ENCODE measurements at regions of chr11 and their contacts with region 1.

Region 1: DNA sequence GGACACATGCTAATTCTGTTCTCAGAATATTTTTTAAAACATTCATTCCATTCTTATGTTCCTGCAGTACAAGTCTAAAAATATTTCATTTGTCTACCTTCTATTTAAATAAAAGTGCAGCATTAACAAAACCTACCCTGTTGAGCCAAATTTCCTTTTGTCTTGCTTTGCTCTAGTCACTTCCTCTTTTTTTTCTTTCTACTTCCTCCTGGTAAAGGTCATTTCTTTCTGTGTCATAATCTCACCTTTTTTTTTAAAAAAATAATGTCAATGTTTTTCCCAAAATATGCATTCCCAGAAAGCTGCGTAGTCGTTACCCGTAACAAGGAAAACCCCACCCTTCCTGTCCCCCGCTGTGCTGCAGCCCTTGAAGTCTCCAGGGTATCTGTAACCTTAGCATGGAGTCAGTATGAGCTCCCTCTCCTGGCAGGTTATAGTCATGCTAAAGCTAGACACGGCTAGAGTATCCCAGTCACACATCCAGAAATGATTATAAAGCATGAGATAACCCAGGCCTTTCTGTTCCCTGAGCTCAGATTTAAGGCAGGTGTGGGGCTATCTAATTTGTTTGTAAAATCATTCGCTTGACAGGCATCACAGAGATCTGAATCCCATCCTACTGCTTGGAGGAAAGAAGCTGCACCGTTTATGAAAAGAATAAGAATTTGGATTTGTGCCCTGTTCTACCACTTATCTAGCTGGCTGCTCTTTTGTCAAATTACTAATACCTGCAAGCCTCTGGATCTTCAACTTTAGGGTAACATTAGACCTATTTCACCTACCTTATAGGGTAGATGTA is 51.1 kb upstream of the EED start:
- DNase-seq: peak; percentile 74
- H3K4me3 Mint-ChIP-seq: peak overlapping the region; percentile 52
- H3K27ac Mint-ChIP-seq: peak overlapping the region; percentile 73
- H3K4me1 Mint-ChIP-seq: peaks cover 19% of the 10 kb centered on the region
- H3K27me3 Mint-ChIP-seq: no peaks in the 10 kb centered on the region

Region 2: DNA sequence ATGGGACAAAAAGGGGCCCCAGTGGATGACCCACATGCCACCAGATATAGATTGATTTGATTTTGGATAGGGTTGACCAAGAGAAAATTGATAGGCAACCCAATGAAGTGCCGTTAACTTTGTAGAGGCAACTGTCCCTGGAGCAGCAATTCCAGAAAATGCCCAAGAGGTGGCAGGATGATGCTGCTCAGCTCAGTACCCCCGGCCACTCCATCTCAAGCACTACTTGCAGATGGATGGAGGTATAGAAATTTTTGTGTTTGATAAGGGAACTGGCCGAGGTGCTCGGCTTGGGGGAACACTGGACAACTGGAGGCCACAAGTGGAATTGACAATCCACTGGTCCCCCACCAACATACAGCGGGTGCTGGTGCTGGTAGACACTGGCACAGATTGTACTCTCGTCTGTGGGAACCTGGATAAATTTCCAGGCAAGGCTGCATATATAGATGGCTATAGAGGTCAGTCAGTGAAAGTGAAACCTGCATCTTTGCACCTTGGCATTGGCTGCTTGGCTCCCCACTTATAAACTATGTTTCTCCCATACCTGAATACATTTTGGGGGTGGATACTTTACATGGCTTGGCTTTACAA is 252.0 kb before region 1 on chr11:
- CTCF ChIA-PET with region 1: interaction called, 4 read pairs
- intact Hi-C with region 1: loop called (anchors 1 kb)
- DNase-seq: peak; percentile 76
- H3K4me3 Mint-ChIP-seq: no peak overlapping the region
- H3K27ac Mint-ChIP-seq: no peak overlapping the region
- H3K4me1 Mint-ChIP-seq: peaks cover 18% of the 10 kb centered on the region
- H3K27me3 Mint-ChIP-seq: no peaks in the 10 kb centered on the region

Region 3: DNA sequence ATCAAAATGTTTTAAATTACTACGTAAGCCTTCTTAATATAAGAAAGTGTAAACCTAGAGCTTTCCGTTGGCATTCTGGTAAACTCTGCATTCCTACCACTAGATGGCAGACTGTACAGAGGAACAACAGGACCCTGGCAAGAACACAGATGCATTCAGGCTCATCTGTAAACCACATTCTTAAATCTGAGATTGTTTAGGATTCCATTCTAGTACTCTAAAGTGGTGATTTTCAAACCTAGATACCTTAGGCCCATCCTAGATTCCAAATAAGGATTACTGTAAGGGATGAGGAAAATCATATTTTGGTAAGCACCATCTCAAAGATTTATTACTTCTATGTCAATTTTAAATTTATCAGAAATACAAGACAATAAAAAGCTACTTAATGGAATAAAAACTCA is 151.5 kb before region 1 on chr11:
- CTCF ChIA-PET with region 1: interaction called, 50 read pairs
- intact Hi-C with region 1: loop called (anchors 1 kb)
- DNase-seq: peak; percentile 77
- H3K4me3 Mint-ChIP-seq: no peak overlapping the region
- H3K27ac Mint-ChIP-seq: peak overlapping the region; percentile 73
- H3K4me1 Mint-ChIP-seq: peaks cover 69% of the 10 kb centered on the region
- H3K27me3 Mint-ChIP-seq: no peaks in the 10 kb centered on the region

Region 4: GRCh38 chr11:86116386-86116726 is 77.1 kb before region 1 on chr11:
- CTCF ChIA-PET with region 1: interaction called, 14 read pairs
- intact Hi-C with region 1: loop called (anchors 2 kb)
- DNase-seq: peak; percentile 57
- H3K4me3 Mint-ChIP-seq: no peak overlapping the region
- H3K27ac Mint-ChIP-seq: peak overlapping the region; percentile 17
- H3K4me1 Mint-ChIP-seq: peaks cover 28% of the 10 kb centered on the region
- H3K27me3 Mint-ChIP-seq: peaks cover 5% of the 10 kb centered on the region

Region 5: DNA sequence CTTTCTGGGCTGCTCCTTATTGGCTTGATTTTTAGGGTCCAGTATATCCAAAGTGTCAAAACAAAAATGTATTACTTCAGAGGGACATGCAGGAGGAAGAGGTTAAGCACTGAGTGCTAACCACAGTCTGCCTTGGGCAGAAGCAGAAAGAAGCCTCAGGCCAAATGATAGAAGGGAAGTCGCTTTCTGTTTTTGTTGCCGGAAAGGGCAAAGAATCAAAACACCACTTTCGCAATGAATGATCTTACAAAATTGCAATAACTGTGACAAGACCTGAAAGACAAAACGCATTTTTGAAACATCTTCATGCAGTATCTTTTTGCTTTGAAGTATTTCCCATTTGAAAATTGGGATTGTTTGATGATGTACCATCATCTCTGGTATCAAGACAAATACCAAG is 54.5 kb before region 1 on chr11:
- CTCF ChIA-PET with region 1: no interaction called
- intact Hi-C with region 1: loop called (anchors 2 kb)
- DNase-seq: peak; percentile 48
- H3K4me3 Mint-ChIP-seq: no peak overlapping the region
- H3K27ac Mint-ChIP-seq: peak overlapping the region; percentile 25
- H3K4me1 Mint-ChIP-seq: peaks cover 13% of the 10 kb centered on the region
- H3K27me3 Mint-ChIP-seq: no peaks in the 10 kb centered on the region

Region 6: GRCh38 chr11:86151174-86152005 is 42.1 kb before region 1 on chr11:
- CTCF ChIA-PET with region 1: no interaction called
- intact Hi-C with region 1: no loop called
- DNase-seq: no peak
- H3K4me3 Mint-ChIP-seq: no peak overlapping the region
- H3K27ac Mint-ChIP-seq: peak overlapping the region; percentile 21
- H3K4me1 Mint-ChIP-seq: peaks cover 13% of the 10 kb centered on the region
- H3K27me3 Mint-ChIP-seq: peaks cover 4% of the 10 kb centered on the region

Region 7: GRCh38 chr11:86174101-86175046 is 19.1 kb before region 1 on chr11:
- CTCF ChIA-PET with region 1: interaction called, 13 read pairs
- intact Hi-C with region 1: loop called (anchors 1 kb)
- DNase-seq: no peak
- H3K4me3 Mint-ChIP-seq: no peak overlapping the region
- H3K27ac Mint-ChIP-seq: no peak overlapping the region
- H3K4me1 Mint-ChIP-seq: peaks cover 20% of the 10 kb centered on the region
- H3K27me3 Mint-ChIP-seq: no peaks in the 10 kb centered on the region

Region 8: DNA sequence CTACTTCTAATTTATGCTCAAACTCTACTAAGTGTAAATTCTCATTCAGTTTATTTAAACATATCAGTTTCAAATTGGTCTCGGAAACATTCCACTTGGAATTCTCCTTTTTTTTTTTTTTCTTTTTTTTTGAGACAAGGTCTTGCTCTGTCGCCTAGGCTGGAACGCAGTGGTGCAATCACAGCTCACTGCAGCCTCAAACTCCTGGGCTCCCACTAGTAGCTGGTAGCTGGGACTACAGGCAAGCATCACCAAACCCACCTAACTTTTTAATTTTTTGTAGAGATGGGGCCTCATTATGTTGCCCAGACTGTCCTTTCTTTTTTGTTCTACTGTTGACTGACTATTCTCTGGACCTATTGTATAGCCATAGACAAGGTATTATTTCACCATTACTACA is 147.9 kb after region 1 on chr11:
- CTCF ChIA-PET with region 1: no interaction called
- intact Hi-C with region 1: no loop called
- DNase-seq: no peak
- H3K4me3 Mint-ChIP-seq: no peak overlapping the region
- H3K27ac Mint-ChIP-seq: no peak overlapping the region
- H3K4me1 Mint-ChIP-seq: peaks cover 14% of the 10 kb centered on the region
- H3K27me3 Mint-ChIP-seq: no peaks in the 10 kb centered on the region